Activated T-helper 2 cell treated with anti-CD3 and anti-CD28 coated beads, Interferon-gamma antibody, Interleukin-2, Interleukin-4, amounts not matched to agents 10 μg/mL and 5 μg/mL and 100 μg/mL, durations not matched to agents 14 hours and 24 hours and 36 hours (primary cell): ENCODE measurements at regions of chr7 and their contacts with region 1.

Region 1: DNA sequence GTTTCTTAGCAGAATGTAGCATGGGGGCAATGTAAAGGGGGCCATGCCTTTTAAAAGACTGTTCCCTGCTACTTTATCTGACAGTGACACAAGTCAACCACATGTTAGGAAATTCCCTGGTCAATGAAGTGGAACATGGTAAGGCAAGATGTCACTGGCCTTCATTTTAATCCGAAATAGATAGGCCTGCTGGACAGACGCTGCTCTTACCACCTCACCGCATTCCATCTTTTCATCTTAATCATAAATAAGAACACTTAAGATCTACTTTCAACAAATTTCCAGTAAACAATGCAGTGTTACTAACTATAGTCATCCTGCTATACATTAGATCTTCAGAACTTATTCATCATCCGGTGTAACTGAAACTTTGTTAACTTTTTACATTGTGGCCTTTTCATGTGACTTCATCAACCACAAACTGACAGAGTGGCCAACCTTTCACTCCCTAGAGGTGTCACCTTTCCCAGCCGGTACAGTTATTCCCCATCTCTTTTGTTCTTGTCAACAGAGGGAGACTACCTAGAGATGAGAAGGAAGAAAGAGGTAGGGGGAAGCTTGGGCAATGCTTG is 15.6 kb downstream of the ASB4 start:
- DNase-seq: peak; percentile 33
- H3K4me3 Mint-ChIP-seq: peak overlapping the region; percentile 18
- H3K27ac Mint-ChIP-seq: peak overlapping the region; percentile 84
- H3K4me1 Mint-ChIP-seq: peaks cover 34% of the 10 kb centered on the region
- H3K27me3 Mint-ChIP-seq: peaks cover 3% of the 10 kb centered on the region

Region 2: GRCh38 chr7:95411036-95411435 is 90.3 kb before region 1 on chr7:
- intact Hi-C with region 1: loop called (anchors 5 kb)
- DNase-seq: no peak
- H3K4me3 Mint-ChIP-seq: no peak overlapping the region
- H3K27ac Mint-ChIP-seq: peak overlapping the region; percentile 73
- H3K4me1 Mint-ChIP-seq: peaks cover 14% of the 10 kb centered on the region
- H3K27me3 Mint-ChIP-seq: peaks cover 2% of the 10 kb centered on the region

Region 3: DNA sequence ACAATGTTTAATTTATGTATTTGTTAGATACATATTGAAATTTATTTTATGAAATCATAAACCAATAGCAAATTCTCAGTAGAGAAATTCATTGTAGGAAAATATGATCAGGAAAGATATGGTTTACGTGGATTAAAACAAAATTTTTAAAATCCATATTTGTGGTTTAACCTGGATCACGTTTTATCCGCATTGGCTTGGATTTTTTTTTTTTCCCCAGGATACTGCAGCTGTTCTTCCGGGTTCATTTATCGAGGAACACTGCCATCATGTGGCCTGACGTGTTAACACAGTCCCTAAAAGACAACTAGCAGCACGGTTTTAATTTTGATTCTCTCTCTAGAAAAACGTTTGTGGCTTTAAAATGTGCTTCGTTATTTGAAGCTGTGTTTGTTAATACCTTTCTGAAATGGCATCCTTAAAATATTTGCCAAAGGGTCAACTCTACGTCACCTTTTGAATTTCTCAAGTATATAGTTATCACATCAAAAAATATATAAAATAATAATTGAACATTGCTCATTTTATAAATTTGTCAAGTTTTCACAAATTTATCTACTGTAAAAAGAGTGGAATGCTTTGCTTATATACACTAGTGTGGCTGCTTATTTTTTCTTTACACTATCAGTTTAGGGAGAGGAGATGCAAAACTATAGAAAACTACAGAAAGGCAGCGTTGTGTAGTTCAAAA is 24.3 kb before region 1 on chr7:
- intact Hi-C with region 1: loop called (anchors 2 kb)
- DNase-seq: peak; percentile 34
- H3K4me3 Mint-ChIP-seq: no peak overlapping the region
- H3K27ac Mint-ChIP-seq: no peak overlapping the region
- H3K4me1 Mint-ChIP-seq: no peaks in the 10 kb centered on the region
- H3K27me3 Mint-ChIP-seq: peaks cover 10% of the 10 kb centered on the region

Region 4: DNA sequence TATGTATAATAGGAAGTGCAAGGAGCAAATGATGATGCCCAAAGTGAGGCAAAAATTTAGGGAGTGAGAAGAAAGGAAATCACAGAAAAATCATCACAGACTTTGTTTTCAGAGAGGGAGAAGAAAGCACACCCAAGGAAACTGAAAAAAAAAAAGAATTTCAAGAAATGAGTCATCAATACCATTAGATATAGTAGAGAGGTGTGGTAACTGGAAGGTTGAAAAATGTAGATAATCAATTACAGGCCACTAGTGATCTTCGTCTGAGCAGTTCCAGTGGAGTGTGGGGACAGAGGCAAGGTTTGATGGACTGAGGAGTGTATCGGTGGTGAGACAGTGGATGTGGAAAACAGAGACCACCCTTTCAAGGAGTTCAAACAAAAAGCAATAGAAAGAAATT is 16.1 kb after region 1 on chr7:
- intact Hi-C with region 1: loop called (anchors 2 kb)
- DNase-seq: no peak
- H3K4me3 Mint-ChIP-seq: no peak overlapping the region
- H3K27ac Mint-ChIP-seq: no peak overlapping the region
- H3K4me1 Mint-ChIP-seq: no peaks in the 10 kb centered on the region
- H3K27me3 Mint-ChIP-seq: peaks cover 35% of the 10 kb centered on the region

Region 5: GRCh38 chr7:95675016-95675415 is 173.7 kb after region 1 on chr7:
- intact Hi-C with region 1: no loop called
- DNase-seq: no peak
- H3K4me3 Mint-ChIP-seq: no peak overlapping the region
- H3K27ac Mint-ChIP-seq: no peak overlapping the region
- H3K4me1 Mint-ChIP-seq: no peaks in the 10 kb centered on the region
- H3K27me3 Mint-ChIP-seq: peaks cover 2% of the 10 kb centered on the region

Region 6: GRCh38 chr7:95986178-95986764 is 484.9 kb after region 1 on chr7:
- intact Hi-C with region 1: no loop called
- DNase-seq: no peak
- H3K4me3 Mint-ChIP-seq: no peak overlapping the region
- H3K27ac Mint-ChIP-seq: no peak overlapping the region
- H3K4me1 Mint-ChIP-seq: no peaks in the 10 kb centered on the region
- H3K27me3 Mint-ChIP-seq: peaks cover 6% of the 10 kb centered on the region